ENCODE measurements at regions of chr5 and their contacts with region 1.

Region 1: DNA sequence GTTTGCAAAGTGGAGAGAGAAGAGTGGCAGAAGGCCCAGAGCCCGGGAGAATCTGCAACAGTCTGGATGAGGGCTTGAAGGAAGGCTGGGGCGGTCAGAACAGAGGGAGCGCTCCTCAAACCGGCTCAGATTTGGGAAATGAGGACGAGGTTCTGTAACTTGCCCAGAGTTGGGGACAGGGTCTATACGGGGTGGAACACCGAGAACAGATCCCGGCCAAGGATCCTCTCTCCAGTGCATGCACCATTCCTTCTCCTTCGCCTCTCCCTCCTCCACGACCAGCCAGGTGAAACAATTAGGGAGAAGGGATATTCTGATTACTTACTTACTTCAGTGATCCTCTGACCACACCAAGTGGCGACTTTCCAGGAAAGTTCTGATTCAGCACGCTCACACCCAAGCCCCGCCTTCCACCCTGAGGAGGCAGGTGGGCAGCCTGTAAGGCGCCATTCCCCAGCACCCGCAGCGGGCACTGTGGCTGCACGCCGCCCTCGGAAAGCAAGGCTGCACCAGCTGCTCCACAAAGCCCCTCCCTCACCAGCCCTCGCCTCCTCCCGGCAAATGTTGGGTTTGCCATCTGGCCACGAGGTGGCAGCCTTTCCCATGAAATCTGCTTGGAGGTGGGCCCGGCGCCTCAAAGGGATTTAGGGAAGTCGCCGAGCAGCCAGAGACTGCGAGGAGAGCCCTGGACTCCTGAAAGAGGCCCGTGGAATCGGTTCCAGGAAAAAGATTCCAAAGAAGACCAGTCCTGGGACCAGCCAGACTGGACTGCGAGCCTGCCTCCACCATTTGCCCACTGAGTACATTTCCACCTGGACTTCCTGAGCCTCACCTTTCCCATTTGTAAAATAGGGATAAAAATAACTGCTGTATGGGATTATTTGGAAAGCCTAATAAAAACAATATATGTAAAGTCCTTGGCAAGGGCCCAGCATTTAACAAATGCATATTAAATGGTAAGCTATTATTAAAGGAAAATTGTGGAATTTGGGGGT is 22.2 kb upstream of the WWC1 start:
- DNase-seq: peak; percentile 36 to 84 (median 66)
- ATAC-seq: peak; percentile 83
- H3K4me3 ChIP-seq: peak overlapping the region; percentile 24
- H3K4me3 Mint-ChIP-seq: peak overlapping the region; percentile 55
- H3K27ac ChIP-seq: no peak overlapping the region
- H3K27ac Mint-ChIP-seq: no peak overlapping the region
- H3K4me1 ChIP-seq: peaks cover 9% of the 10 kb centered on the region
- H3K4me1 Mint-ChIP-seq: peaks cover 12% of the 10 kb centered on the region
- H3K27me3 ChIP-seq: peaks cover 2 to 5% of the 10 kb centered on the region in 2 experiments
- H3K27me3 Mint-ChIP-seq: peaks cover 22% of the 10 kb centered on the region
- CTCF ChIP-seq: peak; percentile 84

Region 2: GRCh38 chr5:168422431-168422830 is 153.2 kb after region 1 on chr5:
- CTCF ChIA-PET with region 1: no interaction called
- POLR2A ChIA-PET with region 1: no interaction called
- intact Hi-C with region 1: loop called in 1 of 2 experiments (anchors 5 kb)
- DNase-seq: peak in 1 of 14 experiments; percentile 11
- ATAC-seq: no peak
- H3K4me3 ChIP-seq: no peak overlapping the region
- H3K4me3 Mint-ChIP-seq: no peak overlapping the region
- H3K27ac ChIP-seq: no peak overlapping the region
- H3K27ac Mint-ChIP-seq: no peak overlapping the region
- H3K4me1 ChIP-seq: no peaks in the 10 kb centered on the region
- H3K4me1 Mint-ChIP-seq: no peaks in the 10 kb centered on the region
- H3K27me3 ChIP-seq: no peaks in the 10 kb centered on the region
- H3K27me3 Mint-ChIP-seq: no peaks in the 10 kb centered on the region
- CTCF ChIP-seq: no peak

Region 3: GRCh38 chr5:168434746-168435321 is 165.6 kb after region 1 on chr5:
- CTCF ChIA-PET with region 1: no interaction called
- POLR2A ChIA-PET with region 1: no interaction called
- intact Hi-C with region 1: loop called in 1 of 2 experiments (anchors 5 kb)
- DNase-seq: no peak
- ATAC-seq: no peak
- H3K4me3 ChIP-seq: no peak overlapping the region
- H3K4me3 Mint-ChIP-seq: no peak overlapping the region
- H3K27ac ChIP-seq: no peak overlapping the region
- H3K27ac Mint-ChIP-seq: no peak overlapping the region
- H3K4me1 ChIP-seq: no peaks in the 10 kb centered on the region
- H3K4me1 Mint-ChIP-seq: no peaks in the 10 kb centered on the region
- H3K27me3 ChIP-seq: no peaks in the 10 kb centered on the region
- H3K27me3 Mint-ChIP-seq: peaks cover 9% of the 10 kb centered on the region
- CTCF ChIP-seq: no peak

Region 4: DNA sequence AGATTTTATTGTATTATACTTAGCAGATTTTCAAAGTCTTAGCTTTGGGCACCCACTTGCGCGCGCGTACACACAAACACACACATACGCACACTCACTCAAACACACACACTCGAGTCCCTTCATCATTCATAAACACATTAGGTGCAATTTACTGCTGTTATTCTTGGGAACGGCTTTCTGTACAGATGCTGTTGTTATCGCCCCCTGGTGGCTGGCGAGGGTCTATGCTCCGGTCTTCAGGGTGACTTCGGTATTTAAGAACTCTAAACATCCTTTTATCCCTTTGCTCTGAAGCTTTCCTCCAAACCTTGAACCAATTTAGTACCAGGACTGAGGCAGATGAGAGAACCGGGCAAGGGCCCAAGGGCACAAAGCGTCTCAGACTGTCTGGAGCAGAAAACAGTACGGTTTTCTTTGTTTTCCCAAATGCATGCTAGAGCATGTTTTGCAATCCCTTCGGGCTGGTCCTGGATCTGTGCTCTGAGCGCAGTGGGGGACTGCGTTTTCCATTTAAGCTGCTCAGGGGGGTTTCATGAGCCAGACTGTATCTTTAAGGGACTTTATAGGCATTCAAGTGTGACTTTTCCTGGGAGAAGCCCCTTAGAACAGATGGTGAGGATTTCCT is 1033.4 kb after region 1 on chr5:
- CTCF ChIA-PET with region 1: no interaction called
- POLR2A ChIA-PET with region 1: no interaction called
- intact Hi-C with region 1: loop called in 1 of 2 experiments (anchors 5 kb)
- DNase-seq: peak in 12 of 14 experiments; percentile 3 to 55 (median 22)
- ATAC-seq: no peak
- H3K4me3 ChIP-seq: no peak overlapping the region
- H3K4me3 Mint-ChIP-seq: no peak overlapping the region
- H3K27ac ChIP-seq: no peak overlapping the region
- H3K27ac Mint-ChIP-seq: no peak overlapping the region
- H3K4me1 ChIP-seq: peaks cover 4% of the 10 kb centered on the region
- H3K4me1 Mint-ChIP-seq: peaks cover 9% of the 10 kb centered on the region
- H3K27me3 ChIP-seq: peaks cover 13 to 37% of the 10 kb centered on the region in 2 experiments
- H3K27me3 Mint-ChIP-seq: peaks cover 82% of the 10 kb centered on the region
- CTCF ChIP-seq: peak; percentile 39